ENCODE measurements at regions of chr16 and their contacts with region 1.

Region 1: DNA sequence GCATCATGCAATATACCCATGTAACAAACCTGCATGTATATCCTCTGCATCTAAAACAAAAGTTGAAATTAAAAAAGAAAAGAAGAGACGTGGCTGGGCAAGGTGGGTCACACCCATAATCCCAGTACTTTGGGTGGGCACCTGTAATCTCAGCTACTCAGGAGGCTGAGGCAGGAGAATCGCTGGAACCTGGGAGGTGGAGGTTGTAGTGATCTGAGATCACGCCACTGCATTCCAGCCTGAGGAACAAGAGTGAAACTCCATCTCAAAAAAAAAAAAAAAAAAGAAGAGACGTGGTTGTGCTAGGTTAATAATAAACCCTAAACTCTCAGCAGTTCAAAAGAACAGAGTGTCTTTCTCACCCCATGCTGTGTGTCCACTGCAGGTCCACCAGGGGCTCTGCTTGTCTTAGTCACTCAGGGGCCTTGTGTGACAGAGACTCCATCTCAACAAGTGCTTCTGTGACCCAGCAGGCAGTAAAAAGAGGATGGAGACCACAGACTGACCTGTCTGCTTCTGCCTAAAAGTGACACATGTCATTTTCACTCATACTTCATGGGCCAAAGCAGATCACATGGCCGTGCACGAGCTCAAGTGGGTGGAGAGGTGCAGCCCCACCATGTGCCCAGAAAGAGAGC is 22.3 kb upstream of the N4BP1 start:
- DNase-seq: no peak
- H3K4me3 Mint-ChIP-seq: no peak overlapping the region
- H3K27ac Mint-ChIP-seq: no peak overlapping the region
- H3K4me1 Mint-ChIP-seq: peaks cover 7% of the 10 kb centered on the region
- H3K27me3 Mint-ChIP-seq: peaks cover 18% of the 10 kb centered on the region
- CTCF ChIP-seq: no peak

Region 2: GRCh38 chr16:48353565-48354163 is 278.6 kb before region 1 on chr16:
- CTCF ChIA-PET with region 1: interaction called, 19 read pairs
- POLR2A ChIA-PET with region 1: interaction called, 4 read pairs
- intact Hi-C with region 1: no loop called
- DNase-seq: peak; percentile 74
- H3K4me3 Mint-ChIP-seq: no peak overlapping the region
- H3K27ac Mint-ChIP-seq: peak overlapping the region; percentile 46
- H3K4me1 Mint-ChIP-seq: no peaks in the 10 kb centered on the region
- H3K27me3 Mint-ChIP-seq: no peaks in the 10 kb centered on the region
- CTCF ChIP-seq: peak; percentile 71

Region 3: GRCh38 chr16:48371393-48371780 is 260.9 kb before region 1 on chr16:
- CTCF ChIA-PET with region 1: interaction called, 10 read pairs
- POLR2A ChIA-PET with region 1: no interaction called
- intact Hi-C with region 1: no loop called
- DNase-seq: no peak
- H3K4me3 Mint-ChIP-seq: no peak overlapping the region
- H3K27ac Mint-ChIP-seq: no peak overlapping the region
- H3K4me1 Mint-ChIP-seq: peaks cover 35% of the 10 kb centered on the region
- H3K27me3 Mint-ChIP-seq: no peaks in the 10 kb centered on the region
- CTCF ChIP-seq: no peak

Region 4: DNA sequence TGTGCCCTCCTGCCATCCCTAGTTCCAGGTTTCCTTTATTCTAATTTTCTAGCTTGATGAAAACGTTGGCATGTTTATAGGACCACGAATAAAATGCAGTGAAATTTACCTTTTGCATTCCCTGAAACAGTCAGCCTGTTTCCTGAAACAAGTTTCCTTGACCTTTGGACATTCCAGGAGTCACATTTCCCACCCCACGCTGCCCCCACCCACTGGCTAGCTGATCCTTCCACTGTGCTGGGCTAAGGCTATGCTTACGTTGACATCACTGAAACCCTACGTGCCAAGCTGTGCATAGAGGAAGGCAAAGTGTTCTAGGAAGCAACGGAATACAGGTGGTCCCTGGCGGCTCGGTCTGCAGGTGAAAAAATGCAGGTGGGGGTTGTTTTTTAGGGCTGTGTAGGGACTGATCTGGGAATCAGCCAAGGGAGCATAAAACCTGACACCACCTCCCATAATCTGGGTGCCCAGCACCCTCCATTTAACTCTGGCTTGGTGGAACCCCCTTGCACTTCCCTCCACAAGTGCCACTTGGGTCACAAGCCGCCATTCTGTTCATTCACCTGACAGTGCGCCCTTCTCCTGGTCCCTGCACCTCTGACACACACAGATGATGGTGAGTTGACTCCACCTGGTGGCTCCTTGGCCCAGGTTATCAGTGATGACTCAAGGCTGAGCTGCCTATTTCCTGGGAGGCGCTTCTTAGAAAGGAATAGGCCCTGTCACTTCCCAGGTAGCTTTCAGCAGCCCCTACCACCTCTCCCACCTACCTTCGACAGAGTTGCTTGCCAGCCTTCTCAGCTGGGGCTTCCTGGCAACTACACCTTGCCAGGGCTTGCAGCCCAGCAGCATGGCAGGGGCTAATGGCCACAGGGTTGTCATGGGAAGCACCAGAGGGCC is 105.9 kb before region 1 on chr16:
- CTCF ChIA-PET with region 1: interaction called, 28 read pairs
- POLR2A ChIA-PET with region 1: no interaction called
- intact Hi-C with region 1: no loop called
- DNase-seq: peak; percentile 84
- H3K4me3 Mint-ChIP-seq: no peak overlapping the region
- H3K27ac Mint-ChIP-seq: no peak overlapping the region
- H3K4me1 Mint-ChIP-seq: peaks cover 12% of the 10 kb centered on the region
- H3K27me3 Mint-ChIP-seq: no peaks in the 10 kb centered on the region
- CTCF ChIP-seq: peak; percentile 69

Region 5: GRCh38 chr16:48542020-48542473 is 90.2 kb before region 1 on chr16:
- CTCF ChIA-PET with region 1: interaction called, 15 read pairs
- POLR2A ChIA-PET with region 1: no interaction called
- intact Hi-C with region 1: no loop called
- DNase-seq: peak; percentile 47
- H3K4me3 Mint-ChIP-seq: no peak overlapping the region
- H3K27ac Mint-ChIP-seq: peak overlapping the region; percentile 63
- H3K4me1 Mint-ChIP-seq: no peaks in the 10 kb centered on the region
- H3K27me3 Mint-ChIP-seq: no peaks in the 10 kb centered on the region
- CTCF ChIP-seq: peak; percentile 35

Region 6: DNA sequence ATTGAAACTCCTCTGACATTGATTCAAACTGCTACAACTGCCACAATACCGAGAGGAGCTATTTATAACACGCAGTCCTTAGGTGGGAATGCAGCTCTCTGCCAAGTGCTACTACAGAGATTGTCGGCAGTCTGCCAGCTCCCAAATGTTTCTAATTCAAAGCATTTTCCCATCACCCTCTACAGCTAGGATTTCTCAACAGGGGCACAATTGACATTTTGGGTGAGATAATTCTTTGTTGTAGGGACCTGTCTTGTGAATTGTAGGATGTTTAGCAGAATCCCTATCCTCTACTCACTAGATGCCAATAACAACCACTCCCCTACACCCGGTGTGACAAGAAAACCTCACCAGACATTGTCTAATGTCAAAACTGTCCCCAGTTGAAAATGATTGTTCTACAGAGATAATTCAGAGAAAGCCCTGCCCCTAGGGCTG is 14.5 kb before region 1 on chr16:
- CTCF ChIA-PET with region 1: interaction called, 19 read pairs
- POLR2A ChIA-PET with region 1: no interaction called
- intact Hi-C with region 1: no loop called
- DNase-seq: peak; percentile 72
- H3K4me3 Mint-ChIP-seq: no peak overlapping the region
- H3K27ac Mint-ChIP-seq: no peak overlapping the region
- H3K4me1 Mint-ChIP-seq: peaks cover 13% of the 10 kb centered on the region
- H3K27me3 Mint-ChIP-seq: no peaks in the 10 kb centered on the region
- CTCF ChIP-seq: no peak

Region 7: GRCh38 chr16:48745541-48745940 is 113.3 kb after region 1 on chr16:
- CTCF ChIA-PET with region 1: no interaction called
- POLR2A ChIA-PET with region 1: no interaction called
- intact Hi-C with region 1: no loop called
- DNase-seq: peak; percentile 5
- H3K4me3 Mint-ChIP-seq: no peak overlapping the region
- H3K27ac Mint-ChIP-seq: no peak overlapping the region
- H3K4me1 Mint-ChIP-seq: no peaks in the 10 kb centered on the region
- H3K27me3 Mint-ChIP-seq: peaks cover 26% of the 10 kb centered on the region
- CTCF ChIP-seq: no peak